PC-3 (cell line): ENCODE measurements at regions of chr15 and their contacts with region 1.

Region 1: GRCh38 chr15:65292938-65293518 is 2.8 kb upstream of the RNU5A-1 start:
- DNase-seq: no peak
- ATAC-seq: no peak
- H3K4me3 ChIP-seq: no peak overlapping the region
- H3K27ac ChIP-seq: no peak overlapping the region
- H3K4me1 ChIP-seq: no peaks in the 10 kb centered on the region; the same call in 1 of the 2 replicates
- H3K27me3 ChIP-seq: no peaks in the 10 kb centered on the region
- CTCF ChIP-seq: no peak

Region 2: GRCh38 chr15:65184868-65185738 is 107.9 kb before region 1 on chr15 and contains the start of gene CLPX:
- CTCF ChIA-PET with region 1: no interaction called
- POLR2A ChIA-PET with region 1: no interaction called
- intact Hi-C with region 1: loop called (anchors 1 kb)
- DNase-seq: peak; percentile 80
- ATAC-seq: peak; percentile 79
- H3K4me3 ChIP-seq: peak within 1 kb of the TSS; percentile 85
- H3K27ac ChIP-seq: peak within 1 kb of the TSS; percentile 41
- H3K4me1 ChIP-seq: peaks cover 10% of the 10 kb centered on the region
- H3K27me3 ChIP-seq: no peaks in the 10 kb centered on the region
- CTCF ChIP-seq: no peak
- total RNA-seq, gene CLPX: 19.3 and 22.5 TPM in 2 replicates